ENCODE measurements at regions of chr3 and their contacts with region 1.

Region 1: DNA sequence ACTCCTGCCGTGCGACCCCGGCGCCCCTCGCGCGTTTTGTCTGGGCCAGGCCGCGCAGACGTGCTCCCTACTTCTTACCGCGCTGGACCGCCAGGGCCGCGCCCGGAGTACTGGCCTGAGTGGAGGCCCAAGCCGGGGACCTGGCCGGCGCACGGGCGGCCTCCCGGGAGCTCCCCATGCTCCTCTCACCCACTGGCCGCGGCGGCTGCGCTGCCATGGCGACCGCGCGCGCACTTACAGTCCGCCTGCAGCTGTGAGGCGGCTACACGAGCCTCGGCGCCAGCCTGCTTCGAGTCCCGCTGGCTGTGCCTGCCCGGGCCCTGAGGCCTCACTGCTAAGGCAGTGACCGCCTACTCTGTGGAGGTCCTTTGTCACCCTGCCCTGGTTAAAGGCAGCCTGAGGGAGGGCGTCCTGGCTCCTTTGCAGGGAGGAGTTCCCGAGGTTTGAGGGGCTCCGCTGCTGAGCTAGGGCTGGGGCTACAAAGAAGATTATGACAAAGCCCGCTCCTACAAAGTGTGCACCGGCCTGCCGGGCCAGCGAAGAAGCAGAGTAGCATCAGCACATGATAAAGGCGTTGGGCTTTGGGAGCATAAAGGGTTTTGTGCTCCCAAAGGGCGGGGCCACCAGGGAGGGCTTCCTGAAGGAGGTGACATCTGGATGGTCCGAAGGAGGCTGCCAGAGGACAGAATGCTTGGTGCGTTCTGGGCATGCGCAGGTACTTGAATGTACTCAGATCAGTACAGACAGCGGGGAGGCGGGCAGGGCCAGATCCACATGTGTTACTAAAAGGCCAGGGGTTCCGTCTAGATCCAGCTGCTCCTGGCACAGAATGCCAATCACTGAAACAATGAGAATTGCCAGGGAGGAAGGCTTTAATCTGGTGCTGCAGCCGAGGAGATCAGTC is at the starts of genes LRRC34 and LRRIQ4:
- DNase-seq: peak; percentile 80
- ATAC-seq: peak; percentile 60
- H3K4me3 ChIP-seq: peak within 1 kb of the TSS; percentile 66 to 79 (median 69)
- H3K4me3 Mint-ChIP-seq: peak within 1 kb of the TSS; percentile 87
- H3K27ac ChIP-seq: peak within 1 kb of the TSS; percentile 46 to 77
- H3K27ac Mint-ChIP-seq: peak within 1 kb of the TSS; percentile 93
- H3K4me1 ChIP-seq: peaks cover 19 to 28% of the 10 kb centered on the region in 2 donors
- H3K4me1 Mint-ChIP-seq: peaks cover 34% of the 10 kb centered on the region
- H3K27me3 ChIP-seq: no peaks in the 10 kb centered on the region
- H3K27me3 Mint-ChIP-seq: no peaks in the 10 kb centered on the region
- CTCF ChIP-seq: no peak
- total RNA-seq, gene LRRC34: 7.1 and 11.8 TPM in 2 replicates
- total RNA-seq, gene LRRIQ4: 0.53 and 0.71 TPM in 2 replicates

Region 2: DNA sequence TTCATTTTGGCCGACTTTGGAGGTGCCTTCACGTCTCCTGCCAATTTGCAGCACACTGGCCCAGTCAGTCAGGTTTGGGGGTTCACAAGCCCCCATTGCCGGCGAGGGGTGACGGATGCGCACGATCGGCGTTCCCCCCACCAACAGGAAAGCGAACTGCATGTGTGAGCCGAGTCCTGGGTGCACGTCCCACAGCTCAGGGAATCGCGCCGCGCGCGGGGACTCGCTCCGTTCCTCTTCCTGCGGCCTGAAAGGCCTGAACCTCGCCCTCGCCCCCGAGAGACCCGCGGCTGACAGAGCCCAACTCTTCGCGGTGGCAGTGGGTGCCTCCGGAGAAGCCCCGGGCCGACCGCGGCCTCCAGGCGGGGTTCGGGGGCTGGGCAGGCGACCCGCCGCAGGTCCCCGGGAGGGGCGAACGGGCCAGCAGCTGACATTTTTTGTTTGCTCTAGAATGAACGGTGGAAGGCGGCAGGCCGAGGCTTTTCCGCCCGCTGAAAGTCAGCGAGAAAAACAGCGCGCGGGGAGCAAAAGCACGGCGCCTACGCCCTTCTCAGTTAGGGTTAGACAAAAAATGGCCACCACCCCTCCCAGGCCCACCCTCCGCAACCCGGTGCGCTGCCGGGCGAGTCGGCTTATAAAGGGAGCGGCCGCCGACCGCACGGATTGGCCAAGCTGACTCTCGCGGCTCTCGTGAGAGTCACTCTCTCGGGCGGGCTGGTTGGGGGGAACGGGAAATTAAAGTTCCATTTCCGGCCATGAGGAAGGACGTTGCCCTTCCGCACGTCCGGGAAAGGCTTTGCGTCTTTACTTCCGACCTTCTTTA is 47.9 kb before region 1 on chr3 and contains the start of gene TERC:
- CTCF ChIA-PET with region 1: interaction called, 6 read pairs
- POLR2A ChIA-PET with region 1: interaction called, 7 read pairs
- intact Hi-C with region 1: loop called (anchors 2 kb)
- DNase-seq: peak; percentile 95
- ATAC-seq: peak; percentile 82
- H3K4me3 ChIP-seq: peak within 1 kb of the TSS; percentile 70 to 100 (median 87)
- H3K4me3 Mint-ChIP-seq: peak within 1 kb of the TSS; percentile 100
- H3K27ac ChIP-seq: peak within 1 kb of the TSS; percentile 95 to 98
- H3K27ac Mint-ChIP-seq: peak within 1 kb of the TSS; percentile 100
- H3K4me1 ChIP-seq: peaks cover 11 to 17% of the 10 kb centered on the region in 2 donors
- H3K4me1 Mint-ChIP-seq: peaks cover 24% of the 10 kb centered on the region
- H3K27me3 ChIP-seq: no peaks in the 10 kb centered on the region
- H3K27me3 Mint-ChIP-seq: no peaks in the 10 kb centered on the region
- CTCF ChIP-seq: no peak
- total RNA-seq, gene TERC: 10.6 and 12.5 TPM in 2 replicates

Region 3: DNA sequence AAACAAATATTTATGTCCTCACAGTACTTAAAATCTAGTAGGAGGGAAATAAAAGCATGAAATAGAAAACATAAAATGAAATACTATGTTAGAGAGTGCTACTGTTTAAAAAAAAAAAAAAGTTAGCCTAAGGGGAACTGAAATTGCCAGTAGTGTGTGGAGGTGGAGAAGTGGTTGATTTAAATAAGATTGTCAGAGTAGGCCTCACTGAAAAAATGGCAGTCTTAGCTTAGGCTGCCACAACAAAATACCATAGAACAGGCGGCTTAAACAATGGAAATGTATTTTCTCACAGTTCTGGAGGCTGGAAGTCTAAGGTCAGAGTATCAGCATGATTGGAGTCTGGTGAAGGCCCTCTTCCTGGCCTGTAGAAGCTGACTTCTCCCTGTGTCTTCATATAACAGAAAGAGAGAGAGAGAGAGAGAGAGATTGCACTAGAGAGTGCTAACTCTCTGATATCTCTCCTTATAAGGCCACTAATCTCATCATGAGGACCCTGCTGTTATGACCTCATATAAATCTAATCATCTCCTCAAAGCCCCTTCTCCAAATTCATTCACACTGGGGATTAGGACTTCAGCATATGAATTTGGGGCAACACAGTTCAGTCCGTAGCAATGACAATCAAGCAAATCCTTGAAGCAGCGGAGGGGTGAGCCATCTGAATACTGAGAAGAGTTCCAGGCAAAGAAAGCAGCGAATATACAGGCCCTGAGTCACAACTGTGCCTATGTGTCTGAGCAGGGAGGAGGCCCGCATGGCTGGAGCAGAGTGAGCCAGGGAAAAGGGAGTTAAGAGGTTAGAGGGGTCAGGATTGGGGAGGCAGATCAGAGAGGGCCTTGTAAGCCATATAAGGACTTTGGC is 23.7 kb after region 1 on chr3:
- CTCF ChIA-PET with region 1: interaction called, 4 read pairs
- POLR2A ChIA-PET with region 1: no interaction called
- intact Hi-C with region 1: loop called (anchors 1 kb)
- DNase-seq: peak; percentile 77
- ATAC-seq: peak; percentile 97
- H3K4me3 ChIP-seq: no peak overlapping the region
- H3K4me3 Mint-ChIP-seq: peak overlapping the region; percentile 21
- H3K27ac ChIP-seq: peak overlapping the region; percentile 75 to 91
- H3K27ac Mint-ChIP-seq: peak overlapping the region; percentile 97
- H3K4me1 ChIP-seq: peaks cover 31 to 35% of the 10 kb centered on the region in 2 donors
- H3K4me1 Mint-ChIP-seq: peaks cover 44% of the 10 kb centered on the region
- H3K27me3 ChIP-seq: no peaks in the 10 kb centered on the region
- H3K27me3 Mint-ChIP-seq: no peaks in the 10 kb centered on the region
- CTCF ChIP-seq: no peak

Region 4: DNA sequence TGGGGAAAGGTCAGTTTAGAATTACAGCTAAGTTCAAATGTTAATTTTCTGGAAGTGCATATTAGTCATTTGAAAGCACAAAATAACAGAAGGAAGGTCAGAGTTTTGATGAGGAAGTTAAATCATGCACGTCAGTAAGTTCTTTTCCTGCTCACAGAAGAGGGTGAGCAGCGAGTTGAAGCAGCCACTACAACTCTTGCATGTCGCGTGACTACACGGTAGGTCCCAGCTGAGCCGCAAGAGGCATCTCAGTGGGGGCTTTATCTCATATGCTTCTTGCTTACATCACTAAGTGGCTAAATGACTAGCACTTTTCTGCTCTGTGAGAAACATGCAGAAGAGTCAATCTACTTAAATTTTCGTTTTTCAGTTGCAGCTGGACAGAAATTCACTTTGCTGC is 132.7 kb after region 1 on chr3:
- CTCF ChIA-PET with region 1: no interaction called
- POLR2A ChIA-PET with region 1: no interaction called
- intact Hi-C with region 1: loop called (anchors 1 kb)
- DNase-seq: peak; percentile 93
- ATAC-seq: peak; percentile 91
- H3K4me3 ChIP-seq: peak overlapping the region in 3 of 5 experiments; percentile 13 to 38 (median 15)
- H3K4me3 Mint-ChIP-seq: peak overlapping the region; percentile 79
- H3K27ac ChIP-seq: peak overlapping the region; percentile 79 to 81
- H3K27ac Mint-ChIP-seq: peak overlapping the region; percentile 91
- H3K4me1 ChIP-seq: peaks cover 82 to 88% of the 10 kb centered on the region in 2 donors
- H3K4me1 Mint-ChIP-seq: peaks cover 87% of the 10 kb centered on the region
- H3K27me3 ChIP-seq: no peaks in the 10 kb centered on the region
- H3K27me3 Mint-ChIP-seq: no peaks in the 10 kb centered on the region
- CTCF ChIP-seq: peak; percentile 11

Region 5: GRCh38 chr3:170007031-170007663 is 194.6 kb after region 1 on chr3:
- CTCF ChIA-PET with region 1: no interaction called
- POLR2A ChIA-PET with region 1: interaction called, 13 read pairs
- intact Hi-C with region 1: no loop called
- DNase-seq: peak; percentile 40
- ATAC-seq: peak; percentile 54
- H3K4me3 ChIP-seq: no peak overlapping the region
- H3K4me3 Mint-ChIP-seq: peak overlapping the region; percentile 1
- H3K27ac ChIP-seq: peak overlapping the region in 1 of 2 donors; percentile 39
- H3K27ac Mint-ChIP-seq: peak overlapping the region; percentile 1
- H3K4me1 ChIP-seq: peaks cover 33 to 38% of the 10 kb centered on the region in 2 donors
- H3K4me1 Mint-ChIP-seq: peaks cover 48% of the 10 kb centered on the region
- H3K27me3 ChIP-seq: no peaks in the 10 kb centered on the region
- H3K27me3 Mint-ChIP-seq: no peaks in the 10 kb centered on the region
- CTCF ChIP-seq: no peak

Region 6: DNA sequence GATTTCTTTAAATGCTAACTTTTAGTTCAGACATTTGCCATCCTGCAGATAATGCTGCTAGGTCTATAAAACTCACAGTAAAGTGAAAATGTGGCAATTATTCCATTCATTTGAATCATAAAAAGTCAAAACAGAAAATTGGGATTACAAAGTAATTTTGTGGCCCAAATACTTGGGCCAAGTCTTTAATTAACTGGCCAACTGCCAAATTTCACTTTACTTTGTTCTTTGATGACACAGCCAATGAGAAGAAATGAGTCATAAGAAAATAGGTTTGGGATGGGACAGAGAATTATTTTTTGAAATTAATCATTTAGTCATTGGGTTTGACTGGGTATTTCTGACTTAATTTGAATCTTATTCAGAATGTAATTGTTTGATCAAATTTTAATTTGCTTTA is 1303.8 kb after region 1 on chr3:
- CTCF ChIA-PET with region 1: no interaction called
- POLR2A ChIA-PET with region 1: no interaction called
- intact Hi-C with region 1: no loop called
- DNase-seq: no peak
- ATAC-seq: no peak
- H3K4me3 ChIP-seq: no peak overlapping the region
- H3K4me3 Mint-ChIP-seq: no peak overlapping the region
- H3K27ac ChIP-seq: no peak overlapping the region
- H3K27ac Mint-ChIP-seq: no peak overlapping the region
- H3K4me1 ChIP-seq: no peaks in the 10 kb centered on the region
- H3K4me1 Mint-ChIP-seq: no peaks in the 10 kb centered on the region
- H3K27me3 ChIP-seq: no peaks in the 10 kb centered on the region
- H3K27me3 Mint-ChIP-seq: no peaks in the 10 kb centered on the region
- CTCF ChIP-seq: no peak

Measured in B cell (primary cell).